T-cell (primary cell): ENCODE measurements at regions of chr10 and their contacts with region 1.

Region 1: GRCh38 chr10:63115732-63116383 is 17.3 kb upstream of the NRBF2 start:
- DNase-seq: no peak
- ATAC-seq: no peak
- H3K4me3 ChIP-seq: no peak overlapping the region
- H3K4me3 Mint-ChIP-seq: no peak overlapping the region
- H3K27ac ChIP-seq: no peak overlapping the region
- H3K27ac Mint-ChIP-seq: no peak overlapping the region
- H3K4me1 ChIP-seq: no peaks in the 10 kb centered on the region
- H3K4me1 Mint-ChIP-seq: no peaks in the 10 kb centered on the region
- H3K27me3 ChIP-seq: no peaks in the 10 kb centered on the region
- H3K27me3 Mint-ChIP-seq: peaks cover under 1 to 6% of the 10 kb centered on the region in 2 donors

Region 2: GRCh38 chr10:63145782-63146181 is 29.9 kb after region 1 on chr10:
- CTCF ChIA-PET with region 1: no interaction called
- POLR2A ChIA-PET with region 1: interaction called in 1 of 2 experiments, 15 read pairs
- DNase-seq: no peak
- ATAC-seq: no peak
- H3K4me3 ChIP-seq: no peak overlapping the region
- H3K4me3 Mint-ChIP-seq: no peak overlapping the region
- H3K27ac ChIP-seq: no peak overlapping the region
- H3K27ac Mint-ChIP-seq: no peak overlapping the region
- H3K4me1 ChIP-seq: peaks cover 0 to 11% of the 10 kb centered on the region in 2 experiments
- H3K4me1 Mint-ChIP-seq: peaks cover 59 to 68% (median 60%) of the 10 kb centered on the region in 3 donors
- H3K27me3 ChIP-seq: no peaks in the 10 kb centered on the region
- H3K27me3 Mint-ChIP-seq: no peaks in the 10 kb centered on the region